ENCODE measurements at regions of chr2 and their contacts with region 1.

Region 1: DNA sequence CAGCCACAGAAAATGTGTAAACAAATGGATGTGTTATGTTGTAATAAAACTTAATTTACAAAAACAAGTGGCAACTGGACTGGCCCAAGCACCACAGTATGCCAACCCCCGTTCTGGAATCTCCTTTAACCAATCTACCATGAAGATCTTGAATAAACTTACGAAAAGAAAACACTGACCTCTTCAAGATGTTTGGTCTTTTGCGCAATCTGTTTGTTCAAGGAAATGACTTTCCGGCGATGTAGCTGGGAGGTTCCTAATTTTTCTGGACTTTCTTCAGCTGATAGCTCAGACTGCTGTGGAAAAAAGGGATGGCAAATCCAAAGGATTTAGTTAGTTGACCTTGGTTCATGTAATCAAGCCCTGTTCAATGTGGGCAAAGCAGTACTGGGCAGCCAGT is 55.7 kb downstream of the CCDC93 start:
- DNase-seq: peak; percentile 59
- H3K4me3 ChIP-seq: no peak overlapping the region
- CTCF ChIP-seq: no peak

Region 2: DNA sequence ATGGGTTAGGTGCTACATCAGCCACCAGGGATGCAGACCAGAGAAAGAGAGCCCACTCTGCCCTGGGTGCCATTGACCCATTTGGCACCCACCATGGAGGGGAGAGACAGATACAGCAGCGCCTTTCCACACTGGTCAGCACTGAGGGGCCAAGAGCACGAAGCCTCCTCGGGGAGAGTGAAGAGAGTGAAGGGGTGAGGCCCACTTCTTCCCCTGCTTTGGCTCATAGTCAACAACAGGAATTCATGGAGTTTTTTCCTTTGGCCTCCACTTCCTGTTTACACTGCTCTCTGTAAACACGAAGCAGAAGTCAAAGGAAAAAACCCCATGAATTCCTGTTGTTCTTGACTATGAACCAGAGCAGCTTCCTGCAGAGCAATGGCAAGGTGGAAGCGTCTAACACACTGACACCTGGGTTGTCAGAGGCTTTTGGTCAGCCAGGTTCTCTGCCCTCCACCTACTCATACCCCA is 24.3 kb before region 1 on chr2:
- CTCF ChIA-PET with region 1: no interaction called
- POLR2A ChIA-PET with region 1: no interaction called
- DNase-seq: no peak
- H3K4me3 ChIP-seq: no peak overlapping the region
- CTCF ChIP-seq: no peak

Region 3: GRCh38 chr2:117972425-117973138 is 14.4 kb after region 1 on chr2:
- CTCF ChIA-PET with region 1: interaction called, 16 read pairs
- POLR2A ChIA-PET with region 1: no interaction called
- DNase-seq: no peak
- H3K4me3 ChIP-seq: no peak overlapping the region
- CTCF ChIP-seq: no peak

Region 4: DNA sequence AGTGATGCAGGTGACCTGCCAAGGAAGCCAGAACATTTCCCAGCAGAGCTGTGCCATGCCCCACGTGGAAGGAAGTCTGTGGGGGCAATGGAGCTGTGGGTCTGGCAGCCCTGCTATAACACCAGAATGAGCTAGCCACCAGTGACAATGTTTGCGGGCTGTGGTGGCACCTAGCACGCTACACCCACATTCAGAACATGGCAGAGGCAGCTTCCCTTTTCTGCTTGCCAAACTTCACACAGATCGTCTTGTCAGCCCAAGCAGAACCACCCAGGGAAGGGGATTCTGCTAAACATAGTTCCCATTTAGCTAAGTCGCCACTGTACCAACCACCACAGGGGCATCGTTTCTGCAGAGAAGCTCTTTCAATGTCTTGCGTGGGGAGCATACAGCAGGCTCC is 82.7 kb after region 1 on chr2:
- CTCF ChIA-PET with region 1: no interaction called
- POLR2A ChIA-PET with region 1: no interaction called
- DNase-seq: no peak
- H3K4me3 ChIP-seq: no peak overlapping the region
- CTCF ChIP-seq: no peak

Region 5: DNA sequence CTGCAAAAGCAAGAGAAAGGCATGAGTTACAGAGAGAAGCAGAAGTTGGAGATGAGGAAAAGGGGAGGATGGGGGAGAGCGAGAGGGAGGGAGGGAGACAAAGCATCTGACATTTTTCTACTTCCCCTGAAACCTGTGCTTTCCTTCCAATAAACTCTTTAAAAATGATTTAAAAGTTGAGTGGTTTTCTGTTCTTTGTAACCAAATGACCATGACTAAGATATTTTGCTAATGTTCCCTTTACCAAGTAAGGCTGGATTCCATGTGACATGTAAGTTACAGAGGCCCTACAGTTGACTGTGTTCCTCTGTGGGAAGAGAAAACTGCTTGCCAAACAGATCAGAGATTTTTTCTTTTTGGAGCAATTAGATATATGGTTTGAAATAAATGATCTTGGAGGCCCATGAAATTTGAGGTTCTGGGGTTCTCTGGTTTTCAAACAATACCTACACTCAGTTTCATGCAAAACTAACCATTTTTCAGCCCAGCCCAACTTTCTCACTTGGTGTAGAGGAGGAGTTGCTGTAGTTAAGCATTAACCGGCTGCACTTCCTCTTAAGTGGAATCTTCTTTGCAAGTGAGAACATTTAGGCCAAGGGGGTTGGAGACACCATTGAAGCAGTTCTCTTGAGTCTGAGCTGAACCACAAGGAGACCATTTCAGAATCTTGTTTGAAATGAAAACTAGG is 164.6 kb after region 1 on chr2:
- CTCF ChIA-PET with region 1: no interaction called
- POLR2A ChIA-PET with region 1: no interaction called
- DNase-seq: no peak
- H3K4me3 ChIP-seq: no peak overlapping the region
- CTCF ChIP-seq: no peak

Measured in AG04449 (cell line).